RWPE1 (cell line): ENCODE measurements at regions of chr7 and their contacts with region 1.

Region 1: GRCh38 chr7:101159071-101159470 is 4.8 kb downstream of the AP1S1 start:
- DNase-seq: no peak
- H3K27ac ChIP-seq: peak overlapping the region; percentile 86
- CTCF ChIP-seq: no peak

Region 2: DNA sequence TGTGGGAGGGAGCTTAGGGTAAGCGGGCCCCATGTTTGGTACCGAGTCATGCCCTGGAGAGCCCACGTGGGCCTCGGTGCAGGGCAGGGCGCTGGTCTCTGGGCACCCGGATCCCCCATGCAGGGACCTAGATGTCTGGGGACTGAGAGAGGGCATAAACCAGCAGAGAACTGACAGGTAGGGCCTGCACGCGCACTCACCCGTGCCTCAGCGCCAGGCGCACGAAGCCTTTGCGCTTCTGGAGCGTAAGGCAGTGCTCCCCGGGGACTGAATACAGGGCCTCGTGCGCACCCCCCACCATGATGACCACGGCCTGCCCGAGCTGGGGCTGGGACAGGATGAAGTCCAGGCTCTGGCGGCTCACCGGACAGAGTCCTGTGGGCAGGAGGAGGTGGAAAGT is 38.9 kb after region 1 on chr7:
- CTCF ChIA-PET with region 1: interaction called, 12 read pairs
- POLR2A ChIA-PET with region 1: no interaction called
- DNase-seq: no peak
- H3K27ac ChIP-seq: no peak overlapping the region
- CTCF ChIP-seq: no peak